HEK293 (cell line): ENCODE measurements at regions of chr16 and their contacts with region 1.

Region 1: GRCh38 chr16:30091474-30092372 is at the start of gene TBX6:
- H3K4me3 ChIP-seq: peak within 1 kb of the TSS; percentile 12
- H3K27ac ChIP-seq: peak within 1 kb of the TSS; percentile 8; the same call in 1 of the 2 replicates
- H3K4me1 ChIP-seq: no peaks in the 10 kb centered on the region
- CTCF ChIP-seq: peak; percentile 98

Region 2: DNA sequence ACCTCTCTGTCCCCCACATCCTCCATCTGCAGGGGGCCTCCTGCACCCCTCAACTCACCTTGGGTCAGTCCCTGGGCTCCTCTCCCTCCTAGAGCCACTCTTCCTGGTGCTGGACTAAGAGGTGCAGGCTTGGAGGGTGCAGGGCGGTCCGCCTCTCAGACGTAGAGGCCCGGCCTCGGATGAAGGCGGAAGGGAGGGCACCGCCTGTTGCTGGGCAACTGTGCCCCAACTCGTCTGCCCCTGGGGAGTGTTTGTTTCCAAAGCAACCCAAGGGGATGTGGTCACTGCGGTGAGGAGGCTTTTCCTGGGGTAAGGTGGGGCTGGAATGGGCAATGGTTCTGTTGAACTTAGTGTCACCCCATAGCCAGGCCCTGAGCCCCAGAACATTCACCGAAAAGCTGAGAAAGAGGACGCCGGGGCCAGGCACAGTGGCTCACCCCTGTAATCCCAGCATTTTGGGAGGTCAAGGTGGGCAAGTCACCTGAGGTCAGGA is 345.8 kb before region 1 on chr16 and contains the start of gene C16orf54:
- CTCF ChIA-PET with region 1: no interaction called
- POLR2A ChIA-PET with region 1: no interaction called
- H3K4me3 ChIP-seq: no peak within 1 kb of the TSS
- H3K27ac ChIP-seq: no peak within 1 kb of the TSS
- H3K4me1 ChIP-seq: no peaks in the 10 kb centered on the region
- CTCF ChIP-seq: no peak

Region 3: GRCh38 chr16:30041846-30042267 is 49.9 kb before region 1 on chr16:
- CTCF ChIA-PET with region 1: interaction called, 10 read pairs
- POLR2A ChIA-PET with region 1: no interaction called
- H3K4me3 ChIP-seq: no peak overlapping the region
- H3K27ac ChIP-seq: no peak overlapping the region
- H3K4me1 ChIP-seq: no peaks in the 10 kb centered on the region
- CTCF ChIP-seq: peak; percentile 78

Region 4: GRCh38 chr16:30065143-30065850 is 26.4 kb before region 1 on chr16 and contains the start of gene ALDOA:
- CTCF ChIA-PET with region 1: interaction called, 8 read pairs
- POLR2A ChIA-PET with region 1: interaction called, 26 read pairs
- H3K4me3 ChIP-seq: peak within 1 kb of the TSS; percentile 94
- H3K27ac ChIP-seq: peak within 1 kb of the TSS; percentile 100
- H3K4me1 ChIP-seq: peaks cover 2% of the 10 kb centered on the region; the same call in 1 of the 2 replicates
- CTCF ChIP-seq: peak; percentile 34; the same call in 1 of the 2 replicates

Region 5: GRCh38 chr16:30075507-30076275 is 16.0 kb before region 1 on chr16 and contains the start of gene PPP4C:
- CTCF ChIA-PET with region 1: interaction called, 12 read pairs
- POLR2A ChIA-PET with region 1: interaction called, 7 read pairs
- H3K4me3 ChIP-seq: peak within 1 kb of the TSS; percentile 78
- H3K27ac ChIP-seq: peak within 1 kb of the TSS; percentile 70
- H3K4me1 ChIP-seq: peaks cover 4% of the 10 kb centered on the region; the same call in 1 of the 2 replicates
- CTCF ChIP-seq: peak; percentile 48; the same call in 1 of the 2 replicates

Region 6: DNA sequence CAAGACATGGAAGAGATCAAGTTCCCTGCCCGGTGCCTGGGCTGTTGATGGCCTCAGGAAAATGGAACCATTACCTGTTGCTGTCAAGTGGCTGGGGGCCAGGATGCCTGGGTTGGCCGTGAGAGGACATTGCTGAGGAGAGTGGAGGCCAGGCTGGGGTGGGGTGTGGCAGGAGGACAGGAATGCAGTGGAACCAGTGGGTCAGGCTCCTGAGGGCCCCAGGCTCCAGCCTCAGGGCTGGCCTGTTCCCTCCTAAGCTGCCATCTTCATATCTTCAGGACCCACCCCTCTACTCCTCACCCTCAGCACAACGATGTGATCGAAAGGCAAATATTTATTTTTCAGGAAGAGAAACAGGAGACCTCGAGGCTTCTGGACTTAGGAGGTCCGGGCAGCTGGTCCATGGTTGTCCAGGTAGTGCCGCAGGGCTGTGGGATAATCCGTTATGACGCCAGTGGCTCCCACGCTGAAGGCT is 12.8 kb after region 1 on chr16:
- CTCF ChIA-PET with region 1: interaction called, 38 read pairs
- POLR2A ChIA-PET with region 1: interaction called, 4 read pairs
- H3K4me3 ChIP-seq: no peak overlapping the region
- H3K27ac ChIP-seq: no peak overlapping the region
- H3K4me1 ChIP-seq: no peaks in the 10 kb centered on the region
- CTCF ChIP-seq: no peak

Region 7: DNA sequence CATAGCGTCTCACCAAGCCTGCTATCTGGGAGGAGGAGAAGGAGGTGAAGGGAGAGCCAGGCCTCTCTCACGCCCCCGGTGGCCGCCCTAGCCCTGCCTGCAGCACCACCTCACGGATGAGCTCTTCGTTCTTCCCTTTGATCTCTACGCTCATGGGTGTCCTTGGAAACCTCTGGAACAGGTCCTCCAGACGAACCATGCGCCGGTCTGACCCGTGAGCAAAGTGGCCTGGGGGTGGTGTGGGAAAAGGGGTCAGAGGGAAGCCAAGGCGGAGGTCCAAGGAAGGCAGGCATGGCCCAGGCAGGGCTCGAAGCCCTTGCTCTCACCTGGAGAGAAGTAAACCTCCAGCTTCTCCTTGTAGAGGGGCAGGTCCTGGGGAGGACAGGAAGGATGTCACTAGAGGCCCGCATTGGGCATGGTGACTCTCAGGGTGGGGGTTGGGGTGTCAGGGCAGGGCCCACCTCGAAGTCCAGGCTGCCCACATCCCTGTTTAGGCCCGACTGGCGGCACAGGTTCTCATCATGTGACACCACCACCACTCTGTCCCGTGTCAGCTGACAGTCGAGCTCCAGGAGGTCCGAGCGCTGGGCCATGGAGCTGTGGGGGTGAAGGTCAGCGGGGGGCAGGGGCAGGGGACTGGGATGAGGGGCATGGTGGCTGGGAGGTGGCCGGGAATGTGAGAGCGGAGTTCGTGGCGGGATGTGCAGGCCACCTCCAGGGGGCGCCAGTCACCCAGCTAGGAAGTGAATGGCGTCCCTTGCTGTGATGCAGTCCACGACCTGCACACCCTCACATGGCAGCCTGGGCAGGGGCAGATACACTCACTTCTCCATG is 20.7 kb after region 1 on chr16:
- CTCF ChIA-PET with region 1: interaction called, 38 read pairs
- POLR2A ChIA-PET with region 1: no interaction called
- H3K4me3 ChIP-seq: no peak overlapping the region
- H3K27ac ChIP-seq: no peak overlapping the region
- H3K4me1 ChIP-seq: no peaks in the 10 kb centered on the region
- CTCF ChIP-seq: peak; percentile 84

Region 8: GRCh38 chr16:30383521-30383920 is 291.8 kb after region 1 on chr16:
- CTCF ChIA-PET with region 1: no interaction called
- POLR2A ChIA-PET with region 1: no interaction called
- H3K4me3 ChIP-seq: no peak overlapping the region
- H3K27ac ChIP-seq: no peak overlapping the region
- H3K4me1 ChIP-seq: no peaks in the 10 kb centered on the region
- CTCF ChIP-seq: no peak